Vagina (tissue), 2 donors: ENCODE measurements at regions of chr12 and their contacts with region 1.

Region 1: GRCh38 chr12:124694846-124695497 is 127.6 kb upstream of the NCOR2 start:
- DNase-seq: no peak
- H3K4me3 ChIP-seq: no peak overlapping the region
- H3K27ac ChIP-seq: no peak overlapping the region
- H3K4me1 ChIP-seq: peaks cover 14% of the 10 kb centered on the region
- H3K27me3 ChIP-seq: no peaks in the 10 kb centered on the region
- CTCF ChIP-seq: no peak
- POLR2A ChIP-seq: no peak

Region 2: GRCh38 chr12:124411281-124411878 is 283.6 kb before region 1 on chr12:
- intact Hi-C with region 1: no loop called
- DNase-seq: peak in 1 of 2 donors; percentile 95
- H3K4me3 ChIP-seq: no peak overlapping the region
- H3K27ac ChIP-seq: peak overlapping the region; percentile 84
- H3K4me1 ChIP-seq: peaks cover 53% of the 10 kb centered on the region
- H3K27me3 ChIP-seq: no peaks in the 10 kb centered on the region
- CTCF ChIP-seq: no peak
- POLR2A ChIP-seq: no peak

Region 3: GRCh38 chr12:124745891-124746570 is 51.1 kb after region 1 on chr12:
- intact Hi-C with region 1: loop called (anchors 10 kb)
- DNase-seq: peak in 1 of 2 donors; percentile 96
- H3K4me3 ChIP-seq: peak overlapping the region in 1 of 2 donors; percentile 4
- H3K27ac ChIP-seq: peak overlapping the region; percentile 78
- H3K4me1 ChIP-seq: peaks cover 31% of the 10 kb centered on the region
- H3K27me3 ChIP-seq: no peaks in the 10 kb centered on the region
- CTCF ChIP-seq: no peak
- POLR2A ChIP-seq: no peak